HepG2 (cell line): ENCODE measurements at regions of chr15 and their contacts with region 1.

Region 1: DNA sequence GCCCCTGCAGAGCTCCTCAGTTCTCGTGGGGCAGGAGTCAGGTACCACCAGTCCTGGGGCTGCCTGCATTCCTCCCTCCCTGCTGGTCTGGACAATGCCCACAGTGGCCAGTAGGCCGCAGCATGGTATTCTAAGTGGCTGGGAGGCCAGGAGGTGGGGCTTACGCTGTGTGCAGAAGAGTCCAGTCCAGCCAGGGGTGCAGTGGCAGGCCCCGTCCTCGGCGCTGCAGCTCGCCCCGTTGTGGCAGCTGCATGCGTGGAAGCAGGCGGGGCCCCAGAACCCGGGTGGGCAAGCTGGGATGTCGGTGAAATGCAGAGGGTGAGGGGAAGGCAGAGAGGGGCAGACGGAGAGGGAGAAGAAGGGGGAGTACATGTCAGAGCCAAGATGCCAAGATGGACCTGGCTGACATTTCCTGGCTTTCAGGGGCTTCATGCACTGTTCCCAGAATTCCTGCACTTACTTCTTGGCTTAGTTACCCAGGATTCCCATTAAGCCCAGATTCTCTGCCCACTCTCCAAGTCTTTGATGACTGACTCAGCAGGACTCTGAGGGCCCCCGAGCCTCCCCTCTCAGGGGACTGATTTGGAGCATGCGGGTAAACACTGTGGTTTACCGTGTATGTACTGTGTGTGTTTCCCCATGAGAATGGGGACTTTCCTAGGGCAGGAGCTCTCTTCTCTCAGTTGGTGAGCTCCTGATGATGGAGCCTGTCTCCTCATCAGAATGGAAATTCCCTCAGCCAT is 47.5 kb downstream of the RAB11A start:
- DNase-seq: peak; percentile 80
- ATAC-seq: peak; percentile 99
- H3K4me3 ChIP-seq: peak overlapping the region in 1 of 3 experiments; percentile 48; a peak in 2 of 6 replicates
- H3K27ac ChIP-seq: no peak overlapping the region
- H3K4me1 ChIP-seq: peaks cover 15% of the 10 kb centered on the region
- H3K27me3 ChIP-seq: no peaks in the 10 kb centered on the region
- CTCF ChIP-seq: peak; percentile 98
- EP300 ChIP-seq: no peak
- POLR2A ChIP-seq: no peak
- RAD21 ChIP-seq: peak; percentile 90

Region 2: DNA sequence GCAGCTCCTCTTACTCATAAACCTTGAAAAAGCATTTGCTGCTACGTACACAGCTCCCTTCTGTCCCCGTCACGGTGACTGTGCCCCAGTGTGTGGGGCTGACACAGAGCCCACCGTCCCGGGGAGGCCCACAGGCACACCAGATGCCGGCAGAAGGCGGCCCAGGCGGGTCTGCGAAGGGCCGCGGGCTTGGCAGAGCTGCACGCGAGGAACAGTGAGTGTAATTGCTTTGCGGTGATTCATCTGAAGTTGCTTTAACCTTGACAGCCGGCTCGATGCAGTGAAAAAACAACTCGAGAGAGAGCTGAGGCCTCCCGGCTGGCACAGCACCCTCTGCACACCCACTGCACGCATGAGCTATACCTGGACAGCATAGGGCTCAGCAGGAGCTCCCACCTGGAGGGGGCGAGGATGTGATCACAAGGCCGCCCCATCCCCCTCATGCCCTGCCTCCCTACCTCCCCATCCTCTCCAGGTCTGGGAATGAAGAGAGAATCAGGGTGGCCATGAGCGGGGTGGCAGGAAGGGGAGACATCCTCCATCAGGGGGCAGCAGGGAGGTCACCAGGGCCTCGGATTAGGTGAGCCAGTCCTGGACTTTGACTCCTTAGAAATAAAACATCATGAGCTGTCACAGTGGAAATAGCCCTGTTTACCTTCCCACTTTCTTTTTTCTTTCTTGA is 164.0 kb after region 1 on chr15:
- CTCF ChIA-PET with region 1: interaction called, 4 read pairs
- POLR2A ChIA-PET with region 1: no interaction called
- in situ Hi-C with region 1: no loop called
- intact Hi-C with region 1: loop called (anchors 10 kb)
- DNase-seq: peak; percentile 72
- ATAC-seq: peak; percentile 91
- H3K4me3 ChIP-seq: no peak overlapping the region; a peak in 1 of 6 replicates
- H3K27ac ChIP-seq: no peak overlapping the region
- H3K4me1 ChIP-seq: peaks cover 14% of the 10 kb centered on the region
- H3K27me3 ChIP-seq: peaks cover 0 to 24% of the 10 kb centered on the region in 2 experiments; a peak in 4 of 5 replicates
- CTCF ChIP-seq: peak; percentile 69
- EP300 ChIP-seq: no peak
- POLR2A ChIP-seq: no peak
- RAD21 ChIP-seq: peak; percentile 55

Region 3: DNA sequence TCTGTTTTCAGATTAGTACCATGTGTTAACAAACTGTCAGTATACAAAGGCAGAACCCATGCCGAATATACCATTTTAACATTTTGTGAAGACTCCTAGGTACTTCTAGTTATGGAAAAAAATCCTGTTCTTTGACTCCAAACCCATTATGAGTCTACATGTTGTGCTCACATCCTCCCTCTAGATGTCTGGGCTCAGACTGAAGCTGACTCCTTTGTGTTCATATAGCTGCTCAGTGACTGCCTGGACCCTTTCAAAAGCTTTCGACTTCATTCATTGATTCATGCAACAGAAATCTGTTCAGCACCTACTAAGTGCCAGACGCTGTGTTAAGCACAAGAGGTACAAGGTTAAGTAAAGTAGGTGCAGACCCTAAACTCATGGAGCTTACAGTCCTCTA is 276.2 kb after region 1 on chr15:
- CTCF ChIA-PET with region 1: no interaction called
- POLR2A ChIA-PET with region 1: no interaction called
- in situ Hi-C with region 1: no loop called
- intact Hi-C with region 1: loop called (anchors 5 kb)
- DNase-seq: no peak
- ATAC-seq: no peak
- H3K4me3 ChIP-seq: no peak overlapping the region
- H3K27ac ChIP-seq: no peak overlapping the region
- H3K4me1 ChIP-seq: no peaks in the 10 kb centered on the region
- H3K27me3 ChIP-seq: peaks cover 0 to 1% of the 10 kb centered on the region in 2 experiments; a peak in 3 of 5 replicates
- CTCF ChIP-seq: no peak
- EP300 ChIP-seq: no peak
- POLR2A ChIP-seq: no peak
- RAD21 ChIP-seq: no peak

Region 4: DNA sequence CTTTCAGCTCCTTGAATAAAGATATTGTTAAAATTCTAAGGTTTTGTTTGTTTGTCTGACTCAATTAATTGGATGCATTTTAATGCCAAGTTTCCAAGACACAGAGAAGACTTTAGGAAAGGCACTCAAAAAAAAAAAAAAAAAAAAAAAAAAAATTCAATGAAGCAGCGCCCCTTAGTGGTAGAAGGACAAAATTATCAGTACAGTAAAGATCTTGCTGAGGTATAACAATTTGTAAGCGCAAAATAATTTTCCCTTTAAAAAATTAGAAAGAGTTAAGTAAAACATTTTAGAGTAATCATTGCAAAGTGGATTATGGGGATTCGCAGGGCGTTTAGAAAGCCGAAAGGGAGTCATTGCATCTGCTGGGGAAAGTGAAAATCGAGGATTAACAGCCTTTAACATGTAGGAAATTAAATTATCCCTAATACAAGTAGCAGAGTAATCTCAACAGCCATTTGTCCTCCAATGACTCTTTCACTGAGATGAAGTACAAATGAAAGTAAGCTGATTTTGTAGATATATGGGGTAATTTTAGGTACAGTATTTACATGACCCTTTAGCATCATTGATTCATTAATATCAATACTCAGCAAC is 370.7 kb after region 1 on chr15:
- CTCF ChIA-PET with region 1: interaction called, 3 read pairs
- POLR2A ChIA-PET with region 1: no interaction called
- in situ Hi-C with region 1: no loop called
- intact Hi-C with region 1: loop called (anchors 1 kb)
- DNase-seq: no peak
- ATAC-seq: 0 out of 3 replicates have a peak, but pooled peaks have one; percentile 25
- H3K4me3 ChIP-seq: no peak overlapping the region
- H3K27ac ChIP-seq: no peak overlapping the region
- H3K4me1 ChIP-seq: peaks cover 23% of the 10 kb centered on the region
- H3K27me3 ChIP-seq: no peaks in the 10 kb centered on the region
- CTCF ChIP-seq: peak; percentile 20; the same call in 1 of the 2 replicates
- EP300 ChIP-seq: no peak
- POLR2A ChIP-seq: no peak
- RAD21 ChIP-seq: no peak